ENCODE measurements at regions of chr6 and their contacts with region 1.

Region 1: GRCh38 chr6:129498950-129499842 is 210.8 kb downstream of the ARHGAP18 start:
- DNase-seq: peak; percentile 67
- ATAC-seq: peak; percentile 28
- H3K4me3 ChIP-seq: peak overlapping the region in 1 of 2 experiments; percentile 19; a peak in 2 of 4 replicates
- H3K27ac ChIP-seq: peak overlapping the region; percentile 97
- H3K4me1 ChIP-seq: peaks cover 67 to 80% of the 10 kb centered on the region in 2 experiments
- H3K27me3 ChIP-seq: no peaks in the 10 kb centered on the region
- CTCF ChIP-seq: peak; percentile 40 to 84 (median 63); a peak in 5 of 6 replicates
- POLR2A ChIP-seq: no peak
- RAD21 ChIP-seq: peak; percentile 92

Region 2: GRCh38 chr6:129567374-129567773 is 68.2 kb after region 1 on chr6:
- CTCF ChIA-PET with region 1: interaction called, 45 read pairs
- POLR2A ChIA-PET with region 1: interaction called, 12 read pairs
- RAD21 ChIA-PET with region 1: interaction called, 3 read pairs
- intact Hi-C with region 1: loop called (anchors 2 kb)
- DNase-seq: peak; percentile 10
- ATAC-seq: peak; percentile 74
- H3K4me3 ChIP-seq: no peak overlapping the region
- H3K27ac ChIP-seq: no peak overlapping the region
- H3K4me1 ChIP-seq: peaks cover 2 to 29% of the 10 kb centered on the region in 2 experiments; a peak in 2 of 4 replicates
- H3K27me3 ChIP-seq: no peaks in the 10 kb centered on the region
- CTCF ChIP-seq: peak; percentile 38 to 71 (median 56); a peak in 5 of 6 replicates
- POLR2A ChIP-seq: no peak
- RAD21 ChIP-seq: peak; percentile 64

Region 3: GRCh38 chr6:129598244-129599187 is 99.3 kb after region 1 on chr6:
- CTCF ChIA-PET with region 1: interaction called, 16 read pairs
- POLR2A ChIA-PET with region 1: no interaction called
- RAD21 ChIA-PET with region 1: interaction called, 4 to 5 read pairs
- intact Hi-C with region 1: no loop called
- DNase-seq: peak; percentile 72
- ATAC-seq: peak; percentile 83
- H3K4me3 ChIP-seq: no peak overlapping the region
- H3K27ac ChIP-seq: peak overlapping the region; percentile 58; the same call in 1 of the 2 replicates
- H3K4me1 ChIP-seq: peaks cover 25 to 26% of the 10 kb centered on the region in 2 experiments
- H3K27me3 ChIP-seq: no peaks in the 10 kb centered on the region
- CTCF ChIP-seq: peak; percentile 52 to 83 (median 81)
- POLR2A ChIP-seq: no peak
- RAD21 ChIP-seq: peak; percentile 92

Region 4: GRCh38 chr6:129667621-129668020 is 168.4 kb after region 1 on chr6:
- CTCF ChIA-PET with region 1: interaction called, 4 read pairs
- POLR2A ChIA-PET with region 1: interaction called, 5 read pairs
- RAD21 ChIA-PET with region 1: no interaction called
- intact Hi-C with region 1: loop called (anchors 5 kb)
- DNase-seq: no peak
- ATAC-seq: no peak
- H3K4me3 ChIP-seq: no peak overlapping the region
- H3K27ac ChIP-seq: peak overlapping the region; percentile 87
- H3K4me1 ChIP-seq: peaks cover 84 to 94% of the 10 kb centered on the region in 2 experiments
- H3K27me3 ChIP-seq: no peaks in the 10 kb centered on the region
- CTCF ChIP-seq: no peak
- POLR2A ChIP-seq: no peak
- RAD21 ChIP-seq: no peak

Region 5: GRCh38 chr6:129774697-129775447 is 275.7 kb after region 1 on chr6:
- CTCF ChIA-PET with region 1: interaction called, 20 read pairs
- POLR2A ChIA-PET with region 1: interaction called, 3 read pairs
- RAD21 ChIA-PET with region 1: no interaction called
- intact Hi-C with region 1: no loop called
- DNase-seq: peak; percentile 68
- ATAC-seq: peak; percentile 93
- H3K4me3 ChIP-seq: peak overlapping the region; percentile 24 to 34
- H3K27ac ChIP-seq: peak overlapping the region; percentile 46
- H3K4me1 ChIP-seq: peaks cover 8 to 13% of the 10 kb centered on the region in 2 experiments; a peak in 3 of 4 replicates
- H3K27me3 ChIP-seq: no peaks in the 10 kb centered on the region
- CTCF ChIP-seq: peak; percentile 77 to 100 (median 98)
- POLR2A ChIP-seq: no peak
- RAD21 ChIP-seq: peak; percentile 85

Region 6: DNA sequence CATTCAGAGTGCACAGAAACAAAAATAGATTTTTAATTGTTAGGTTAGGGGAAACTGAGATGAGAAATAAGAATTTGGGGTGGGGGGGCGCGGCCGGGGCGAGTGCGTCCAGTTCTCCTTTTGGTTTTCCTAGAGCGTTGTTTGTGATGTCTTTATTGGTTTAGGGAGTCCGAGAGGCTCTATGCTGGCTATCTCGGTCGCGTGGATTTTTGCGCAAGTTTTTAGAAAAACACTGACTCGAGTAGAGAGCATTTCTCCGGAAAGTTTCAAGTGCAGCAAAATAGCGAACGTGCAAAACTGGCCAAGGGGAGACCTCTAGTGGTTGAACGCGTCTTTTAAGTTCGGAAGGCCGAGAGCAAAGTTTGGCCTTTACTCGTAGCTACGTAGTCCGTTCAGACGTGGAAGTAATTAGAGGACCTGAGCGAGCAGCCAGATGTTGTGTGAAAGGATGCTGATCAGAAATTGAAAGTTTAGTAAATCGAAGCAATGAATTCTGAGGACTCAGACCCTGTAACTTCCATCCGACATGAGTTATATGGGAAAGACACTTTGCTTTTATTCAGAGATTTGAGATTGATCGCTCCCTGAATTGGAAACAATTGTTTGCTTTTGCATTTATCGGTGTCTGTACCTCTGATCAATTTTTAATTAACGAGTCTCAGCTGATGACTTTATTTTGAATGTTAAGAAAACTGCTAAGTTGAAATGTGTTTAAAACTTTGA is 521.9 kb after region 1 on chr6:
- CTCF ChIA-PET with region 1: interaction called, 16 read pairs
- POLR2A ChIA-PET with region 1: no interaction called
- RAD21 ChIA-PET with region 1: no interaction called
- intact Hi-C with region 1: loop called (anchors 2 kb)
- DNase-seq: peak; percentile 85
- ATAC-seq: peak; percentile 65
- H3K4me3 ChIP-seq: peak overlapping the region; percentile 64 to 72
- H3K27ac ChIP-seq: peak overlapping the region; percentile 93
- H3K4me1 ChIP-seq: peaks cover 12 to 13% of the 10 kb centered on the region in 2 experiments; a peak in 3 of 4 replicates
- H3K27me3 ChIP-seq: no peaks in the 10 kb centered on the region
- CTCF ChIP-seq: peak; percentile 61 to 83 (median 81); a peak in 5 of 6 replicates
- POLR2A ChIP-seq: no peak
- RAD21 ChIP-seq: peak; percentile 91

Measured in HCT116 (cell line).